ENCODE measurements at regions of chr12 and their contacts with region 1.

Region 1: DNA sequence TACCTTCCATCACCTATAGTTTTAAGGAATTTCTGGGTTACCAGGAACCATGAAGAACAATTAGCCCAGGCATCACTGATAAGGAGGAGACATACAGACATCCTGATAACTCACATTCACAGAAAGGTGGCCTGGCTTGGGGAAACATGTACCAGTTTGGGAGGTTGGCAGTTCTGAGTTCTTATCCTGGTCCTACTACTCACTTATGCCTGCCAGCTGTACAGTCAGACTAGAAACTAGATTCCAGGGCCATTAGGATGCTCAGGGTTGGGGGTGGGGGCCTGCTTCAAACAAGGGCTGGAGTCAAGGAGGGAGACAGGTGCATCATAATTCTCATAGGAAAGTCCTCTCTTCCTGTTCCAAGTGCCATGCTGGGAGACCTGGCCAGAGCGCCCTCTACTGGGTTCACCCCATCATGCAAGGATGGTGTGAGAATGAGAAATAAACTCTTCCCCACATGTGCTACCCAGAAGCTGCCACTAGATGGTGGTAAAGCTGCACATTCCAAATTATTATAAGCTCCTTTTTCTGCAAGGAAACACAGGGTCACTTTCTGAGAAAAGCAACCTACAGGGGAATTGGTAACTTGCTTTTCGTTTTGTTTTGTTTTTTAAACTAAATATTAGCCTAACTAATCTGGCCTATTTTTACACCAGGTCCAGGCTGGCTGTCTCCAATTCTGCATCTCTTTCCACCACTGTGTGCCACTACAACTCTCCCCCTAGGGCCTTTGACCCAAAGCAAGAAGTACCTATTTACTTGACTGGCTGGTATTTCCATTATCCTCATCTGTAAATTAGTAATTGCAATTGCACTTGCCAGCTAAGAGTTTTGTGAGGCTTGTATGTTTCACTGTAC is 14.5 kb downstream of the OAS2 start:
- H3K4me3 ChIP-seq: no peak overlapping the region
- H3K27ac ChIP-seq: no peak overlapping the region
- H3K4me1 ChIP-seq: no peaks in the 10 kb centered on the region
- CTCF ChIP-seq: peak; percentile 65

Region 2: GRCh38 chr12:112891093-112892024 is 101.4 kb before region 1 on chr12:
- CTCF ChIA-PET with region 1: no interaction called
- POLR2A ChIA-PET with region 1: no interaction called
- H3K4me3 ChIP-seq: no peak overlapping the region
- H3K27ac ChIP-seq: no peak overlapping the region
- H3K4me1 ChIP-seq: no peaks in the 10 kb centered on the region
- CTCF ChIP-seq: no peak

Region 3: GRCh38 chr12:113005754-113006153 is 13.0 kb after region 1 on chr12:
- CTCF ChIA-PET with region 1: interaction called, 35 read pairs
- POLR2A ChIA-PET with region 1: no interaction called
- H3K4me3 ChIP-seq: no peak overlapping the region
- H3K27ac ChIP-seq: no peak overlapping the region
- H3K4me1 ChIP-seq: no peaks in the 10 kb centered on the region
- CTCF ChIP-seq: 0 out of 2 replicates have a peak, but pooled peaks have one; percentile 15

Region 4: GRCh38 chr12:113030875-113031525 is 38.2 kb after region 1 on chr12:
- CTCF ChIA-PET with region 1: interaction called, 26 read pairs
- POLR2A ChIA-PET with region 1: no interaction called
- H3K4me3 ChIP-seq: no peak overlapping the region
- H3K27ac ChIP-seq: no peak overlapping the region
- H3K4me1 ChIP-seq: no peaks in the 10 kb centered on the region
- CTCF ChIP-seq: peak; percentile 48; the same call in 1 of the 2 replicates

Region 5: DNA sequence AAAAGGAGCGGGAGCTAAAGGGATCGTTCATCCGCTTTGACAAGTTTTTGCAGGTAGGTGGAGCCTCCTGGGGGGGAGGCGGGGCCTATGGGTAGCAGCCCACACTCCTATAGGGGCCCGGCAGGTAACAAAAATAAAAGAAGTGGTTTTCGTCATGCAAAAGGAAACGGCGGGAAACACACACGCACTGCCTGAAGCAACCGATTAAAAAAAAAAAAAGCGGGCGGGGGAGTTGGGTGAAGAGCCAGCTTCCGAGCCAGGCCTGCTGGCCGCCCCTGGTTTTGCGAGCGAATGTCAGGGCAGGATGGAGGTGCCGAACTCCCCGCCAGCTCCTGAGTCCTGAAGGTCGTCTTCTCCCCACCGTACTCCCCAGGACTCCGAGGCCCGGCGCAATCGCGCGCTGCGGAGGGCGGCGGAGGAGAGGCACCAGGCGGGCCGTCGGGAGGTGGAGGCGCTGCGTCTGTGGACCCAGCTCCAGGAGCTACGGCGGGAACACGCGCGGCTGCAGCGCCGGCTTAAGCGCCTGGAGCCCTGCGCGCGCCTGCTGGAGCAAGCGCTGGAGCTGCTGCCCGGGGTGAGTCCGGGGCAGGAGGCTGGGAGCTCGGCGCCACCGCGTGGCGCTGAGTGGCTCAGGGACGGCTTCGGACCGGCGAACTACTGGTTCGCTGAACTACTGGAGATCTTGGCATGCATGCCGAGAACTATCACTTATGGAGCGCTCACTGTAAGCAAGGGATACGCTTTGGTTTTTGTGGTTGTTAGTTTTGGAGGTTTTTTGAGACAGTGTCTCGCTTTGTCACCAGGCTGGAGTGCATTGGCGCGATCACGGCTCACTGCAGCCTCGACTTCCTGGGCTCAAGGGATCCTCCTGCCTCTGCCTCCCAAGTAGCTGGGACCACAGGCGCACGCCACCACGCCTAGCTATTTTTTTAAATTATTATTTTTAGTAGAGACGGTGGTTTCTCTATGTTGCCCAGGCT is 160.4 kb after region 1 on chr12:
- CTCF ChIA-PET with region 1: interaction called, 17 read pairs
- POLR2A ChIA-PET with region 1: no interaction called
- H3K4me3 ChIP-seq: peak overlapping the region; percentile 49
- H3K27ac ChIP-seq: no peak overlapping the region; the same call in 1 of the 2 replicates
- H3K4me1 ChIP-seq: 0 out of 2 replicates have a peak, but pooled peaks cover 3% of the 10 kb centered on the region
- CTCF ChIP-seq: peak; percentile 87

Region 6: DNA sequence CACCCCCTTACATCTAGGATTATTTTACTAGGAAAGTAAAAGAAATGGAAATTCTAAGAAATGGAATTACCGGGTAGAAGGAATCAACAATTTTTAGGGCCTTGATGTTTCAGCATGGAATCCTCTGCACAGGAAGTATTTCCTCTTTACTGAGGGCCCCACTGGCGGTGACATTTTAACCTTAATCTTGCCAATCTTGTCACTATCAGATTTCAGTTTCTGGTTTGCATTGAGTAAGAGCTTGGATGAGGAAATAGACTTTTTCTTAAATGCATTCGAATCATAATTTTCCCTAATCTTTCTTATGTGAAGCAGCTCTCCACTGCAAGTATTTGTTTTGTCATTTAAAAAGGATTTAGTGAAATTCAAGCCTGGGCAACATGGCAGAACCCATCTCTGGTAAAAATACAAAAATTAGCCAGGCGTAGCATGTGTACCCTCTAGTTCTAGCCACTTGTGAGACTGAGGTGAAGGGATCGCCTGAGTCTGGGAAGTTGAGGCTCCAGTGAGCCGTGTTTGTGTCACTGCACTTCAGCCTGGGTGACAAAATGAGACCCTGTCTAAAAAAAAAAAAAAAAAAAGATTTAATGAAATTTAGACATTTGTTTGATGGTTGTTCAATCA is 269.2 kb after region 1 on chr12:
- CTCF ChIA-PET with region 1: no interaction called
- POLR2A ChIA-PET with region 1: no interaction called
- H3K4me3 ChIP-seq: no peak overlapping the region
- H3K27ac ChIP-seq: no peak overlapping the region
- H3K4me1 ChIP-seq: no peaks in the 10 kb centered on the region
- CTCF ChIP-seq: no peak